Activated CD4-positive, alpha-beta T cell treated with anti-CD3 and anti-CD28 coated beads for 36 hours (primary cell): ENCODE measurements at regions of chr2 and their contacts with region 1.

Region 1: DNA sequence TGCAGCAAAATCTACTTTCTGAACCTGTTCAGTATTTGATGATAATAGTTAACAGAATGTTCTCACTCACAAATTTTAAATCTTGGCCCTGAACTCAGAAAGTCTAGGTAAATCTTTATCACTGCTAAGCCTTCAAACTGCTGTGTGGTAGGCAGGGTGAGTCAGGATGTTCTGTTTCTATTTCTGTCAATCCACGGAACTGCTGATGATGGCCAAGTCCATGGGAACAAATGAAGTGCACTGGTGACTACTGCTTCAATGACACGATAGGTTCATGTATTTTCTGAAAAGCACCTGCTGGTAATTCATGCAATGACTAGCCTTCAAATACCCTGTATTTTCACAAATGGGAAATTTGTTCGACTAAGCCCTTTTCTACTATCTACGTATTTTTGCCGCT is 14.2 kb downstream of the NIFK start:
- DNase-seq: peak; percentile 68
- ATAC-seq: peak; percentile 92
- H3K4me3 Mint-ChIP-seq: peak overlapping the region; percentile 45
- H3K27ac Mint-ChIP-seq: peak overlapping the region; percentile 96
- H3K4me1 Mint-ChIP-seq: peaks cover 30% of the 10 kb centered on the region
- H3K27me3 Mint-ChIP-seq: no peaks in the 10 kb centered on the region

Region 2: DNA sequence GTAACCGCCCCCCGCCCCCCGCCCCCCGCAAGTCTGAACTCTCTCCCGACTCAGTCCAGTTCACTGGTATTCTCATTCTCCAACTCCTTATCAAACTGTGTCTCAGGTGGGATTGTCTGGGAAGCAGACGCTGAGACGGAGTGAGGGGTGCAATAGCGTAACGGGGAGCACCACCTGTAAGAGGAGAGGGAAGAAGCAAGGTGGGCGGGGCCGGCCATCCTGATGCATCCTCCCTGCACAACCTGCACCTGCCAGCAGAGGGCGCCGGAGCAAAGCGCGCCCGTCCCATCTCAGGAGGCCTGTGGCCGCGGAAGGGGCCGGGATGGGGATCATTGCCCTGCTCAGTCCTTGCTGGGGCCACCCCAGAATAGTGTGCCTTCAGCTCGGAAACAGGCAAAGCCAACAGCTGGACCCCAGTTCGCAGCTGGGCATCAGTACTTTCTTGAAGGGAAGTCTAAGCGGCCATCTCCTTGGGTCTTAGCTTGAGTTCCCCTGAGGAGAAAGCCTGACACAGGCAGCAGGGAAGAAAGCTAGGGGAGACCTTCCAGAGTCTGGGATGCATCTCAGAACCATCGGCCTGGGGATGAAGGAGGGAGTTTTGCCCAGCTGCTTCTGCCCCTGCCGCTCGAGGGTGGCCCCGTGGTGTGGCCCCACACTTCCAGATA is 645.5 kb before region 1 on chr2:
- CTCF ChIA-PET with region 1: no interaction called
- POLR2A ChIA-PET with region 1: interaction called, 5 read pairs
- intact Hi-C with region 1: loop called in 1 of 2 experiments (anchors 5 kb)
- DNase-seq: peak; percentile 87
- ATAC-seq: peak; percentile 60
- H3K4me3 Mint-ChIP-seq: no peak overlapping the region
- H3K27ac Mint-ChIP-seq: no peak overlapping the region
- H3K4me1 Mint-ChIP-seq: peaks cover 2% of the 10 kb centered on the region
- H3K27me3 Mint-ChIP-seq: peaks cover 23% of the 10 kb centered on the region

Region 3: DNA sequence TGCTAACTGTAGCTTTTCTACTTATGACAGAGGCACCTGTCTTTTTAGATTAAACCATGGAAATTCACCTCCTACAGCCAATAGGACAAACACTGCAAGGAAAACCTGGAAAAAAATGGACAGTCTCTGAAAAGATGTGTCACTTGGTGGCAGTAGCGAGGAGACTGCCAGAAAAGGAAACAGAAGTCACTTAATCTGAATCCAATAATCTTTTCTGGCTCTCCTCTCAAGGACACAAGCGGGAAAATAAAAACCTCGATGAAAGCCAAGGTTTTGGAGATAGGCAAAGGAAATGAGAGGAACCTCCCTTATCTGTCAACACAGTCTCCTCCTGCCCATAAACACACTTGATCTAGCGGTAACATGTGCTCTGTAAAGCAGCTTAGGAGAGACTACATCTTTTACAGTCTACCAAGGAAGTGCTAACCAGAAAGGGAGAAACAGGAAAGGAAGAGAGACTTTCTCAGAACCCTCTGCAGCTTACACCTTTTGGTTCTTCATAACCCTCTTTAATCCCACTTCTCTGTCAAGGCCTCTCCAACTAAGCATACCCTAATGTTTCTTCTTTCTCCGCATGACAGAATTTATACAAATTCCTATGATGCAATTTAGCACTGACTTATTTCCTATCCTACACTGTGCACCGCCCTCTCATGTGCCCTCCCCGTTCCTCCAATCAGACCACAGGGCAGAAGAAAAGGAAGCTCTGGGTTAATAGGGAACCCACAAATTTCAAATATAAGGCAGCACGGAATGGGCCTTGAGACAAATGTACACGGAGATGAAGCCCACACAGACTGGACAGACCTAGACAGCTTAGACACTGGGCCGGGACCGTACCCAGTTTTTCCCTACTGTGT is 126.0 kb before region 1 on chr2:
- CTCF ChIA-PET with region 1: interaction called, 3 read pairs
- POLR2A ChIA-PET with region 1: no interaction called
- intact Hi-C with region 1: loop called in 1 of 2 experiments (anchors 1 kb)
- DNase-seq: peak; percentile 44
- ATAC-seq: peak; percentile 90
- H3K4me3 Mint-ChIP-seq: peak overlapping the region; percentile 64
- H3K27ac Mint-ChIP-seq: peak overlapping the region; percentile 88
- H3K4me1 Mint-ChIP-seq: peaks cover 51% of the 10 kb centered on the region
- H3K27me3 Mint-ChIP-seq: no peaks in the 10 kb centered on the region

Region 4: GRCh38 chr2:121699421-121700333 is 22.8 kb before region 1 on chr2:
- CTCF ChIA-PET with region 1: interaction called, 6 read pairs
- POLR2A ChIA-PET with region 1: interaction called, 9 read pairs
- intact Hi-C with region 1: loop called (anchors 1 kb)
- DNase-seq: peak; percentile 95
- ATAC-seq: peak; percentile 98
- H3K4me3 Mint-ChIP-seq: peak overlapping the region; percentile 64
- H3K27ac Mint-ChIP-seq: peak overlapping the region; percentile 95
- H3K4me1 Mint-ChIP-seq: peaks cover 44% of the 10 kb centered on the region
- H3K27me3 Mint-ChIP-seq: no peaks in the 10 kb centered on the region

Region 5: GRCh38 chr2:121755236-121756111 is 33.0 kb after region 1 on chr2 and contains the start of gene TSN:
- CTCF ChIA-PET with region 1: interaction called, 4 read pairs
- POLR2A ChIA-PET with region 1: no interaction called
- intact Hi-C with region 1: loop called in 1 of 2 experiments (anchors 1 kb)
- DNase-seq: peak; percentile 99
- ATAC-seq: peak; percentile 100
- H3K4me3 Mint-ChIP-seq: peak within 1 kb of the TSS; percentile 98
- H3K27ac Mint-ChIP-seq: peak within 1 kb of the TSS; percentile 93
- H3K4me1 Mint-ChIP-seq: peaks cover 30% of the 10 kb centered on the region
- H3K27me3 Mint-ChIP-seq: no peaks in the 10 kb centered on the region
- total RNA-seq, gene TSN: 44.0 to 71.2 TPM